Dorsolateral prefrontal cortex (tissue), 120 donors: ENCODE measurements at regions of chr1 and their contacts with region 1.

Region 1: DNA sequence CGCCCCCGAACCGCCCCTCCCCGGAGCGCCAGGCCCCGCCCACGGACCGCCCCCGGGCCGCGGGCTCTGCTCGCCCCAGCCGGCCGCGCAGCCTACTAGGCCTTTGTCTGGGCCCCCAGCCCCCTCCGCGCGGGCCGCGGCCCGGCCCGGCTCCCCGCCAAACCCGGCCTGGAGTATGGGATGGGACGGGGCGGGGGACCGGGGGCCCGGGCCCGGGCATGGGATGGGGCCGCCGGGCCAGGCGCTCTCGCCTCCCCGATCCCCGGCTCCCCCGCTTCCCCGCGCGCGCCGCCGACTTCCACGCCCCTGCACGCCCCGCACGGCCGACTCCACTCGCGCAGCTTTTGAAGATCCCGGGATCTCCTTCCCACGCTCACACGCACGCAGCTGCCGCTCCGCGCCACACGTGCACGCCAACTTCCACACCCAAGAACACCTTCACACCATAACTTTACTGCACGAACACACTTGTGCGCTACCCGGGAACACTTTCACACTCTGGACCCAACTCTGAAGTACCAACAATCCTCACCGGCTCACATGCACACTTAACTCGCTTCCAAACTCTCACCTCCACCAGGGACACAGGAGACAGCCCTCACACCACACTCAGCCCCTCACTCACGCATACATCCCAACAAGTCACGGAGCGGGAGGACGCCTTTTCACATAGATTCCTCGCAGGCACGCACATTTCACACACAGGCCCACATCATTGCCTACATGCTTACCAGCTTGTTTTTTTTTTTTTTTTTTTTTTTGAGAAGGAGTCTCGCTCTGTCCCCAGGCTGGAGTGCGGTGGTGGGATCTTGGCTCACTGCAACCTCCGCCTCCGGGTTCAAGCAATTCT is 487 bp upstream of the HSPG2 start:
- DNase-seq: peak; percentile 42 to 90 (median 82)
- H3K4me3 ChIP-seq: peak overlapping the region; percentile 8 to 81 (median 64)
- H3K27ac ChIP-seq: peak overlapping the region in 42 of 59 donors; percentile 6 to 88 (median 54)
- H3K27me3 ChIP-seq: peaks cover 0 to 4% (median 0%) of the 10 kb centered on the region in 45 donors
- CTCF ChIP-seq: peak in 1 of 56 donors; percentile 5

Region 2: DNA sequence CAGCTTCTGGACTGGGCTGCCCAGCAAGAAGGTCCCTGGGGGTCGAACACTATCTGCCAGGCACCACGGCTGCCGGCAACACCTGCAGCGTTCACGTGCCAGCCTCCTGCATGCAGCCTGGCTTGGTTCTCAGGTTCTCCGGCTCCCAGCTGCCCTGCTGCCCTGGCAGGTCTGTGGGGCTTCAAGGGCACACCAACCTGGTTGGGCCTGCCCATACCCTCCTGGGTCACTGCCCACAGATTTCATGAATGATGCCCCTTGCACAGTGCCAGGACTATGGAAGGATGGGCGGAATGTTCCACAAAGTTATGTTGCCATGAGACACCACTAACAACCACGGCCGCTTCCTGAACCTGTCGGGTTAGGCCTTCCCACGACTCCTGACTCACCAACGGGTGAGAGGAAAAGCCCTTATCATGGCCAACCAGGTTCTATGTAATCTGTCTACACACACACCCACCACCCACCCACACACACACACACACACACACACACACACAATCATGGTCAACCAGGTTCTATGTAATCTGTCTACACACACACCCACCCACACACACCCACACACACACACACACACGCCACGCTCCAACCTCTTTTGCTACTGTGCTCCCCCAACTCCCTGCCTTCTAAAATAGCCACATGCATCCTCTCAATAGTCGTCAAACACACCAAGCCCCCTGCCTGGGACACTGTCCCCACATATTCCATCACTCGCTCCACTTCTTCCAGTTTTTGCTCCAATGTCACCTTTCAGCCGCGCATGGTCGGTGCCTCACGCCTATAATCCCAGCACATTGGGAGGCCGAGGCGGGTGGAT is 32.7 kb before region 1 on chr1:
- intact Hi-C with region 1: no loop called
- DNase-seq: no peak
- H3K4me3 ChIP-seq: no peak overlapping the region
- H3K27ac ChIP-seq: no peak overlapping the region
- H3K27me3 ChIP-seq: no peaks in the 10 kb centered on the region
- CTCF ChIP-seq: no peak

Region 3: GRCh38 chr1:22025368-22026155 is 88.0 kb after region 1 on chr1:
- intact Hi-C with region 1: loop called in 1 of 2 experiments (anchors 10 kb)
- DNase-seq: peak; percentile 74 to 93 (median 87)
- H3K4me3 ChIP-seq: peak overlapping the region; percentile 57 to 100 (median 93)
- H3K27ac ChIP-seq: peak overlapping the region; percentile 57 to 98 (median 90)
- H3K27me3 ChIP-seq: no peaks in the 10 kb centered on the region
- CTCF ChIP-seq: peak in 22 of 56 donors; percentile 4 to 45 (median 24)

Region 4: DNA sequence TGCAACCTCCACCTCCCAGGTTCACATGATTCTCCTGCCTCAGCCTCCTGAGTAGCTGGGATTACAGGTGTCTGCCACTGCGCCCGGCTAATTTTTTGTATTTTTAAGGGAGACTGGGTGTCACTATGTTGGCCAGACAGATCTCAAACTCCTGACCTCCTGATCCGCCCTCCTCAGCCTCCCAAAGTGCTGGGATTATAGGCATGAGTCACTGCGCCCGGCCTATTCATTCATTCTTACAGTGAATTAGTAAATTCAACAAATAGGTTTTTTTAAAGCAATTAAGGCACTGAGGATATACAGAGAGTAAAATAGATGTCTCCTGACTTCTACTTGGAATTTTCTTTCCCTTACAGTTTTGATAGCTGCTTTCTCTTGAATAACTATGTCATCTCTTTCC is 158.4 kb after region 1 on chr1:
- intact Hi-C with region 1: no loop called
- DNase-seq: no peak
- H3K4me3 ChIP-seq: no peak overlapping the region
- H3K27ac ChIP-seq: no peak overlapping the region
- H3K27me3 ChIP-seq: no peaks in the 10 kb centered on the region
- CTCF ChIP-seq: no peak

Region 5: GRCh38 chr1:22451702-22452474 is 514.3 kb after region 1 on chr1 and contains the start of gene ZBTB40:
- intact Hi-C with region 1: loop called in 1 of 2 experiments (anchors 5 kb)
- DNase-seq: peak; percentile 94 to 98 (median 96)
- H3K4me3 ChIP-seq: peak within 1 kb of the TSS; percentile 67 to 100 (median 93)
- H3K27ac ChIP-seq: peak within 1 kb of the TSS; percentile 65 to 99 (median 95)
- H3K27me3 ChIP-seq: no peaks in the 10 kb centered on the region
- CTCF ChIP-seq: peak in 27 of 56 donors; percentile 5 to 44 (median 21)
- total RNA-seq, gene ZBTB40: 12.6 to 33.7 (median 21.8) TPM